Activated CD4-positive, alpha-beta T cell treated with anti-CD3 and anti-CD28 coated beads, Interleukin-2, amount 10 ng/mL, durations not matched to agents 24 days and 14 days (primary cell): ENCODE measurements at regions of chr7 and their contacts with region 1.

Region 1: GRCh38 chr7:37201003-37201875 is 247.4 kb downstream of the ELMO1 start:
- DNase-seq: peak; percentile 83
- H3K4me3 Mint-ChIP-seq: no peak overlapping the region
- H3K27ac Mint-ChIP-seq: no peak overlapping the region
- H3K4me1 Mint-ChIP-seq: peaks cover 12% of the 10 kb centered on the region
- H3K27me3 Mint-ChIP-seq: no peaks in the 10 kb centered on the region

Region 2: DNA sequence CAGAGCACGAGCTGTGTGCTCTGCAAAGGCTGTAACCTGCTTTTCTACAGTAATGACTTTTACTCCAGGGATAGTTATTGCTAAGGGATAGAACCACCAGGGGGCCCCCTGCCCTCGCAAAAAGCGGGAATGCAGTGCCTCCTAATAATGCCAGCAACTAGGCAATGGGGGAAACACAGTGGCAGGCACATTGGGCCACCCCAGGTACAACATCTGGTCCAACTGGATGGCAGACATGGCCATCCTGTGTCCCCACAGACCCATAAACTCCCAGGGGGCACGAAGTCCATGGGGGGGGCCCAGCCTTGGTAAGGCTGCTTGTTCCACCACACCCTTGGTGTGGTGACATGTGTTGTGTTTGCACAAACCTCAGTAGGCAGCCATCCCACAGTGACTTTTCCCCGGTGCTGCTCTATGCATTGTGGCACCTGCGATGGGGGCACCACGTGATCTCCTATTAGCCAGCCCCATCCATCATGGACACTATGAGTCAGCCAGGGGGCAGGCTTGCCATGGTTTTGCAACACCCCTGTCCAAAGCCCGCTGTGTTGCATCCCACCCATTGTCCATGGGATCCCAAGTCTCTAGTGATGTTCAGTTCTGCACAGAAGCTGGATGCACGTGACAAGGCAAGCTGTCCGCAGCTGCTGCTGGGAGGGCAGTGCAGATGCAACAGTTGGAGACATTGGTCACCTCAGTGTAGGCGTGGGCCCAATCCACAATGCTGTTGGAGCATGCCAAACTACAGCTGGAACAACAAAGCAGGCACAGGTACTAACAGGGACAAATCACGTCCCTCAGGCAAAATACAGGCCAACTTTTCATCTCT is 727.6 kb before region 1 on chr7:
- intact Hi-C with region 1: loop called (anchors 5 kb)
- DNase-seq: peak; percentile 78
- H3K4me3 Mint-ChIP-seq: no peak overlapping the region
- H3K27ac Mint-ChIP-seq: no peak overlapping the region
- H3K4me1 Mint-ChIP-seq: peaks cover 18% of the 10 kb centered on the region
- H3K27me3 Mint-ChIP-seq: no peaks in the 10 kb centered on the region

Region 3: GRCh38 chr7:36487756-36488336 is 713.4 kb before region 1 on chr7:
- intact Hi-C with region 1: loop called (anchors 1 kb)
- DNase-seq: peak; percentile 85
- H3K4me3 Mint-ChIP-seq: no peak overlapping the region
- H3K27ac Mint-ChIP-seq: no peak overlapping the region
- H3K4me1 Mint-ChIP-seq: peaks cover 4% of the 10 kb centered on the region
- H3K27me3 Mint-ChIP-seq: peaks cover 12% of the 10 kb centered on the region

Region 4: DNA sequence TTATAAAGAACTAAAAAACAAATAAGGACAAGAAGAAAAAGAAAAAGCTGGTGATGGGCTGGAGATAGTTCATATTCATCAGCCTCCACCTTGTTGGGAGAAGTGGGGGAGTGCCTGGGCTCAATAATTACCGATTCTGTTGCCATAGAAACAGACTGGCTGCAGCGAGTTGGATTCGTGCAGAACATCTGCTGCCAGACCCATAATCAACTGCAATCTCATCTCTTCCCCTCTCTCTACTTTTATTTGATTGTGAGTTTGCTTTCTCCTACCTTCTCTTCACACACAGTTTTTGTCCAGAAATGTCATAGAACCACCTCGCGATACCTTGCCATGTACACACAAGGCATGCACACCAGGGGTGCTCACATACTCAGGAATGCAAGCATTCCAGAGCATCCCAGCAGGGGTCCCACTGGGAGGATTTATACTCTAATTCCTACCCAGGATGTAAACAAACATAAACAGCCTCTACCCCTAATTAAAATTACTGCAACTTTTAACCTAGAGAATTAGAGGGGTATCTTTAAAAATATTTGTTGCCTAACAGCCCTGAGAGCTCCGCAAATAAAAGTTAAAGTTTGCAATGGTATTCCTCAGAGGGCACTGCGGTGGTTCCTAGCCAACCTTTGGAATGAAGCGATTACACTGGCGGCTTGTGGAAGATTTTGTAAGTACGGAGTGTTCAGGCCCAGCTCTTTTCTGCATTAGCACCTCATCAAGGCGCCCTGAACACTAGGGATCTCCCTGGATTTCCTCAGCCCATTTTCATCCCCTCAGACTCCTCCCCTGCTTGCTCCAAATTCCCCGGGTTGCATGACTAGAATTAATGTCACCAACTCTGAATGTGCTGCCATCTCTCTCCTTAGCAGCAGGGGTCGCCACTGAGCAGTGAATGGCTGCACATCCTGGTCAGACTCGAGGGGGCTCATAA is 214.5 kb before region 1 on chr7:
- intact Hi-C with region 1: loop called (anchors 5 kb)
- DNase-seq: peak; percentile 85
- H3K4me3 Mint-ChIP-seq: no peak overlapping the region
- H3K27ac Mint-ChIP-seq: no peak overlapping the region
- H3K4me1 Mint-ChIP-seq: peaks cover 14% of the 10 kb centered on the region
- H3K27me3 Mint-ChIP-seq: no peaks in the 10 kb centered on the region